Psoas muscle (tissue), 8 donors: ENCODE measurements at regions of chr9 and their contacts with region 1.

Region 1: DNA sequence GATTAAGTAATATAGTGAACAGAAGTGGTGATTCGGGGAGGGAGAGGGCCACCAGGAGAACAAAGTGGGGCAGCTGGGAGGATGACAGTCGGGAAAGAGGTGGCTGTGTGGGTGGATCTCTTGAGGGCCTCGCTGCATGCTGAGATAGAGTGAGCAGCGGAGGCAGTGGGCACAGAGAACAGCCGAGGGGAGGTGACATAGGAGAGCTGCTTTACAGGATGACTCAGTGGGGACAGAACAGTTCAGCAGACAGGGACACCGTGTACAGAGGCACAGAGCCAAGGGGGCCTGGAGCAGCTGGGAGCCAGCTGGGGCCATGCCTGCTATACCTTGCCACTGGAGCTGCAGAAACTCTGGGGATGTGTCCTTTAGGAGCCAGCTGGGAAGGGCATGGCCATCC is 273.9 kb downstream of the GADD45G start:
- DNase-seq: peak; percentile 83 to 95
- ATAC-seq: peak; percentile 87 to 94 (median 90)
- H3K4me3 ChIP-seq: no peak overlapping the region
- H3K27ac ChIP-seq: peak overlapping the region; percentile 72
- H3K4me1 ChIP-seq: peaks cover 49% of the 10 kb centered on the region
- H3K27me3 ChIP-seq: no peaks in the 10 kb centered on the region
- CTCF ChIP-seq: no peak

Region 2: GRCh38 chr9:89634995-89635742 is 243.5 kb before region 1 on chr9:
- intact Hi-C with region 1: loop called in 1 of 2 experiments (anchors 10 kb)
- DNase-seq: no peak
- ATAC-seq: peak in 2 of 4 donors; percentile 23 to 29
- H3K4me3 ChIP-seq: no peak overlapping the region
- H3K27ac ChIP-seq: no peak overlapping the region
- H3K4me1 ChIP-seq: peaks cover 43% of the 10 kb centered on the region
- H3K27me3 ChIP-seq: no peaks in the 10 kb centered on the region
- CTCF ChIP-seq: no peak

Region 3: DNA sequence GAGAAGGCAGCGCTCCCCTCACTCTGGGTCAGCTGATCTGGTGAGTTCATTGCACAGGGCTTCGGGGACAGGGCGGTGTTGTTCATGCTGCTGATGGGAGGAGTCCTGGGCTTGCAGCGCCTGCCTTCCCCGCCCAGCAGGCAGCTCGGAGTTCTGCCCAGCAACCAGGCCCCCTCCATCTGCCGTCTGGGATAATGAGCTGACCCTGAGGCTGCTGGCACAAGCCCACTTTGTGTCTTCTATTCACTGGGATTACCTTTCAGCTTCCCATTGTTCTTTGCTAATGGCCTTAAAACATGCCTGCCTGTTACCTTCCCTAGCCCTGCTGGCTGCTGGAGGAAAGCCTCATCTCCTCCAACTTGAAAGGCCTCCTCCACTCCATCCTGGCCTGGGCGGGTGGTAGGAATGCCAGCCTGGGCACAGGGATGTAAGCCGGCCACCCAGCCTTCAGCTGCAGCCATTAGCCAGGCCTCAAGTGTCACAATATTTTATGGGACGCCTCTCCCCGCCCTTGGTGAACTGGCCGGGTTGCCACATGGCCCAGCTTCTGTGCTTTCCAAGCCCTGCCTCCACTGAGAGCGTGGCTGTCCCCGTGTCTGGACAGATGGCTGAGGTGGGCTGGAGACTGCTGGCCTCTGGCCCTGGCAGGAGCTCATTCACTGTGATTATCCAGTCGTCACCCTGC is 203.5 kb before region 1 on chr9:
- intact Hi-C with region 1: loop called (anchors 5 to 10 kb)
- DNase-seq: peak; percentile 71 to 91
- ATAC-seq: peak; percentile 90 to 94 (median 90)
- H3K4me3 ChIP-seq: no peak overlapping the region
- H3K27ac ChIP-seq: peak overlapping the region; percentile 78
- H3K4me1 ChIP-seq: peaks cover 41% of the 10 kb centered on the region
- H3K27me3 ChIP-seq: no peaks in the 10 kb centered on the region
- CTCF ChIP-seq: no peak

Region 4: DNA sequence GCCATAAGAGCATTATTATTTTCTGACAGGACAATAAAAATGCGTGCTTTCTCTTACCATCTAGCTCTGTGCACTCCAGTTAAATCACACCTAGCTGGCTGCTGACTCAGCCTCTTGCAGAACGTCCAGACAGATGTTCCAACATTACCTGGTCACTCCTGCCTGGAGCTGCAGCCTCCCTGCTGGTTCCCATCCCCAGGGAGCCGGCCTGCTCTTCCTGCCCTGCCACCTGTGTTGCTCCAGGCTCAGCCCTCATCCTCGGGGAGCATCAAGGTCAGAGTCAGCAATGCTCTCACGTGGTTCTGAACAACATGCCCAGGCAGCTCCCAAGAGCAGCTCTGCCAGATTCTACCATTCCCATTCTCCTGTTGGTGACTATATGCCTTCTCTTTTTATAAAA is 192.6 kb before region 1 on chr9:
- intact Hi-C with region 1: loop called in 1 of 2 experiments (anchors 10 kb)
- DNase-seq: no peak
- ATAC-seq: peak in 1 of 4 donors; percentile 64
- H3K4me3 ChIP-seq: no peak overlapping the region
- H3K27ac ChIP-seq: no peak overlapping the region
- H3K4me1 ChIP-seq: peaks cover 14% of the 10 kb centered on the region
- H3K27me3 ChIP-seq: no peaks in the 10 kb centered on the region
- CTCF ChIP-seq: no peak